Heart right ventricle (tissue), 16 donors: ENCODE measurements at regions of chr11 and their contacts with region 1.

Region 1: GRCh38 chr11:106724293-106724892 is 293.9 kb downstream of the GUCY1A2 start:
- DNase-seq: no peak
- ATAC-seq: peak in 1 of 8 donors; percentile 35
- H3K4me3 ChIP-seq: no peak overlapping the region
- H3K27ac ChIP-seq: no peak overlapping the region
- H3K4me1 ChIP-seq: no peaks in the 10 kb centered on the region
- H3K27me3 ChIP-seq: no peaks in the 10 kb centered on the region
- CTCF ChIP-seq: no peak

Region 2: DNA sequence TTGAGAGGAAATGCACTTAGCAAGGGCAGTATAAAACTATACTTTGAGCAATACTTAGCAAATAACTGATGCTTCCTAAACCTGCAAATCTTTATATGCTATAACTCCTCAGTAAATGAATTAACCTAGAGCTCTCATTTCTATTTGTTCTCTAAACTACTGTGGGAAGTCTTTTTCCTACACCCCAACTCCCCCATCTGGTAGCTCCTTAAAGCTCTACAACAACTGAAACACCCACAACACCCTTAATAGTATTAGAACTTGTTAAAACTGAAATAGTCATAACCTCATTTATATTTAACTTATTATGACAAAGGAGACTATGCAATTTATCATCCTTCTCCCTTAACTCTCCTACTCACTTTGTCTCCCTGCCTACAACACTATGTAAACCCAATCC is 250.4 kb after region 1 on chr11:
- intact Hi-C with region 1: loop called in 1 of 10 experiments (anchors 5 kb)
- DNase-seq: no peak
- ATAC-seq: no peak
- H3K4me3 ChIP-seq: no peak overlapping the region
- H3K27ac ChIP-seq: no peak overlapping the region
- H3K4me1 ChIP-seq: peaks cover 0 to 16% (median 0%) of the 10 kb centered on the region in 9 donors
- H3K27me3 ChIP-seq: no peaks in the 10 kb centered on the region
- CTCF ChIP-seq: no peak